CD4-positive, alpha-beta memory T cell (primary cell): ENCODE measurements at regions of chr18 and their contacts with region 1.

Region 1: DNA sequence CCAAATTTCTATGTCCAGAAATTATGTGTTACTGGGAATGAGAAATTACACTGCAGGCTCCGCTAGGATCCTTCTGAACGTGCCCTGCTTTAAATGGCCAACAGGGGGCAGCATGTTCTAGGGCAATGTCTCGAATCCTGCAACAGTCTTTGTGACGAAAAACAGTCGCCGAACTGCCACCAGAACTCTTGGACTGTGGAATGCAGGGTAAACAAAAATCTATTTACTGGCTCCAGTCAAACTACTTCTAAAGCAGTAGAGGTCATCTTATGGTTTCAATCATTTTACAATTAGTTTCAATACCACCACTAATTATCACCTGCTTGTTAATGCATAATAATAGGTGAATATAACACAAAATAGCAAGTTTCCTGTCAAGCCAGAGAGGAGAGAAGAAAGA is 9.8 kb upstream of the ZNF397 start:
- DNase-seq: peak; percentile 72 to 79 (median 78)
- H3K4me3 ChIP-seq: no peak overlapping the region
- H3K4me3 Mint-ChIP-seq: peak overlapping the region in 7 of 8 donors; percentile 21 to 76 (median 51)
- H3K27ac ChIP-seq: no peak overlapping the region
- H3K27ac Mint-ChIP-seq: peak overlapping the region in 1 of 7 donors; percentile 50
- H3K4me1 ChIP-seq: no peaks in the 10 kb centered on the region
- H3K4me1 Mint-ChIP-seq: peaks cover 3 to 4% (median 3%) of the 10 kb centered on the region in 4 donors
- H3K27me3 ChIP-seq: no peaks in the 10 kb centered on the region
- H3K27me3 Mint-ChIP-seq: no peaks in the 10 kb centered on the region

Region 2: DNA sequence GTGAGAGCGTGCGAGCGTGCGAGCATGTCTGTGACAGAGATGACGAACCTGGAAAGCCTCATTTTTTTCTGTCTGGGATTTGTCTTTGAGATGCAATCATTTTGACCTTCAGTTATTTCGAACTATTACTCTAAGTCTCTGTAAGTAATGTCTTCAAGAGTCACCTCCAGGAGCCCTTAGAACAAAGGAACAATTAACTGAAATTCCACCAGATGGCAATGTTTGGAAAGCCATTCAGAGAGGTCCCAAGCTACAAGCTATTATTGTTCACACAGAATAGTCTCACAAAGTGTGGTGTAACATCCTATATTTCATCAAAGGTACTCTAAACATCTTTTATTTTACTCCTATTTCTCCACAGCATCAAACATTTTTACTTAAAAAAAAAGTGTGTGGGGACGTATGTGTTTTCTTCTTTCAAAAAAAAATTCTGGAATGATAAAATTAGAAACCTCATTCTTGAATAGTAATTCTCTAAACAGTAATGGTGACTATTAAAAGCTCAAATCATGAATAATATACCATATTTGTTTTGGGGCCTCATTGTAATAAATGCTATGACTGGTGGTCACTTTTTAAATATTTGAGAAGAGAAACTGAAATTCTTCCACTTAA is 225.0 kb before region 1 on chr18:
- CTCF ChIA-PET with region 1: interaction called, 6 read pairs
- POLR2A ChIA-PET with region 1: no interaction called
- intact Hi-C with region 1: loop called (anchors 1 kb)
- DNase-seq: peak; percentile 35 to 63 (median 51)
- H3K4me3 ChIP-seq: no peak overlapping the region
- H3K4me3 Mint-ChIP-seq: no peak overlapping the region
- H3K27ac ChIP-seq: no peak overlapping the region
- H3K27ac Mint-ChIP-seq: no peak overlapping the region
- H3K4me1 ChIP-seq: no peaks in the 10 kb centered on the region
- H3K4me1 Mint-ChIP-seq: no peaks in the 10 kb centered on the region
- H3K27me3 ChIP-seq: no peaks in the 10 kb centered on the region
- H3K27me3 Mint-ChIP-seq: peaks cover 0 to 3% of the 10 kb centered on the region in 2 donors

Region 3: DNA sequence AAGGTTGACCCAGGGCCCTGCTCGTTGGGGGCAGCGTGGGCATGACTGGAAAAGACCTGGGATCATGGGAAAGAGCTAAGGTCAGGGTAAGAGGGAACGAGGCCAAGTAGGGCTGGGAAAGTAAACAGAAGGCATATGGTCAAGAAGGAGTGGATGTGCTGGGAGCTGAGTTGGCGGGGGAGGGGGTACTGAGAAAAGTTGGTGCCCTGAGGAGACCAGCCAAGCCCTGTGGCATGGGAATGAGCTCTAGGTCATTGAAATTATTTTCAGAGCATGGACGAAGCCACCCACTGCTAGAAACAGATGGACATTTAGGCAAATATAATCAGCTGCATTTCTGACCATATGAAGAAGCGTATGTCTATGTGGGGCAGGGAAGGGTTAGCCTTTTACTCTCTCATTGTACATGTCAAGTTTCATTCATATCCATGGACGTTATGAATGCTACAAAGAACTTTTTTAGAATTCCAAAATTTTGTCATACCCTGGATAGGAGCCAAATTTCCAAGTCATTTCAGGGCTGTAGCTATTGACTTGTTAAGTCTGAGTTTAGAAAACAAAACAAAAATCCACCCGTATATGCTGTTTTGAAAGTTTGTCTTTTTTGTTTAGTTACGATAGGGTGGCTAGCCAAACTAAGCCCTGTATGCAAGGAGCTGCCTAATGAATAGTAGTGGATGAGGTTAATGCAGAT is 170.8 kb before region 1 on chr18:
- CTCF ChIA-PET with region 1: no interaction called
- POLR2A ChIA-PET with region 1: no interaction called
- intact Hi-C with region 1: no loop called
- DNase-seq: no peak
- H3K4me3 ChIP-seq: no peak overlapping the region
- H3K4me3 Mint-ChIP-seq: no peak overlapping the region
- H3K27ac ChIP-seq: no peak overlapping the region
- H3K27ac Mint-ChIP-seq: peak overlapping the region in 3 of 7 donors; percentile 22 to 88 (median 69)
- H3K4me1 ChIP-seq: no peaks in the 10 kb centered on the region
- H3K4me1 Mint-ChIP-seq: peaks cover 34 to 77% (median 53%) of the 10 kb centered on the region in 4 donors
- H3K27me3 ChIP-seq: no peaks in the 10 kb centered on the region
- H3K27me3 Mint-ChIP-seq: no peaks in the 10 kb centered on the region

Region 4: GRCh38 chr18:35267161-35267651 is 36.2 kb after region 1 on chr18:
- CTCF ChIA-PET with region 1: interaction called, 21 read pairs
- POLR2A ChIA-PET with region 1: no interaction called
- intact Hi-C with region 1: no loop called
- DNase-seq: peak; percentile 49 to 69 (median 51)
- H3K4me3 ChIP-seq: peak overlapping the region; percentile 23 to 78
- H3K4me3 Mint-ChIP-seq: peak overlapping the region; percentile 93 to 99 (median 96)
- H3K27ac ChIP-seq: peak overlapping the region; percentile 62
- H3K27ac Mint-ChIP-seq: peak overlapping the region; percentile 83 to 98 (median 96)
- H3K4me1 ChIP-seq: peaks cover 10% of the 10 kb centered on the region
- H3K4me1 Mint-ChIP-seq: peaks cover 17 to 30% (median 25%) of the 10 kb centered on the region in 4 donors
- H3K27me3 ChIP-seq: no peaks in the 10 kb centered on the region
- H3K27me3 Mint-ChIP-seq: no peaks in the 10 kb centered on the region

Region 5: DNA sequence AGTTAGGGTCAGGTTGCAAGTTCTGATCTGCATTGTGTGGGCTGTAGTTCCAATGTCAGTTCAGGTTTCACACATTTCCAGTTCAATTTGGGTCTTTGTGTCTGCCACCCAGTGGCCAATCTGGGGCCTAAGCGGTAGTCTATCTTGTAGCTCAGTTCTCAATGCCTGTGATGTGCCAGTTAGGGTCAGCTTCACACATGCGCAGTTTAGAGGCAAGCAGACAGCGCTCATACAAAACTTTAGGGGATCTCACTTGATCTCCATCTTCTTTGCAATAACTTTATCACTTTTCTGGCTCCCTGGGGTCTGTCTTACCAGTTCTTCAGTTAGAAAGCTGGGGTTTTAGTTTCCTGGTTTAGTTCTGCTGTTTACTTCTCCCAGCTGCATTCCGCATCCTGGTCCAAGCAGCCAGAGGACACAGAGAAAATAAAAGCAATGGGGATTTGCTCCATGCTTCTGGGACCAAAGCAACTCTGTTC is 124.1 kb after region 1 on chr18:
- CTCF ChIA-PET with region 1: interaction called, 88 read pairs
- POLR2A ChIA-PET with region 1: interaction called, 4 read pairs
- intact Hi-C with region 1: loop called (anchors 1 kb)
- DNase-seq: peak; percentile 54 to 63 (median 60)
- H3K4me3 ChIP-seq: no peak overlapping the region
- H3K4me3 Mint-ChIP-seq: no peak overlapping the region
- H3K27ac ChIP-seq: no peak overlapping the region
- H3K27ac Mint-ChIP-seq: peak overlapping the region in 1 of 7 donors; percentile 19
- H3K4me1 ChIP-seq: no peaks in the 10 kb centered on the region
- H3K4me1 Mint-ChIP-seq: peaks cover 0 to 2% (median 0%) of the 10 kb centered on the region in 4 donors
- H3K27me3 ChIP-seq: no peaks in the 10 kb centered on the region
- H3K27me3 Mint-ChIP-seq: peaks cover 0 to 2% of the 10 kb centered on the region in 2 donors

Region 6: DNA sequence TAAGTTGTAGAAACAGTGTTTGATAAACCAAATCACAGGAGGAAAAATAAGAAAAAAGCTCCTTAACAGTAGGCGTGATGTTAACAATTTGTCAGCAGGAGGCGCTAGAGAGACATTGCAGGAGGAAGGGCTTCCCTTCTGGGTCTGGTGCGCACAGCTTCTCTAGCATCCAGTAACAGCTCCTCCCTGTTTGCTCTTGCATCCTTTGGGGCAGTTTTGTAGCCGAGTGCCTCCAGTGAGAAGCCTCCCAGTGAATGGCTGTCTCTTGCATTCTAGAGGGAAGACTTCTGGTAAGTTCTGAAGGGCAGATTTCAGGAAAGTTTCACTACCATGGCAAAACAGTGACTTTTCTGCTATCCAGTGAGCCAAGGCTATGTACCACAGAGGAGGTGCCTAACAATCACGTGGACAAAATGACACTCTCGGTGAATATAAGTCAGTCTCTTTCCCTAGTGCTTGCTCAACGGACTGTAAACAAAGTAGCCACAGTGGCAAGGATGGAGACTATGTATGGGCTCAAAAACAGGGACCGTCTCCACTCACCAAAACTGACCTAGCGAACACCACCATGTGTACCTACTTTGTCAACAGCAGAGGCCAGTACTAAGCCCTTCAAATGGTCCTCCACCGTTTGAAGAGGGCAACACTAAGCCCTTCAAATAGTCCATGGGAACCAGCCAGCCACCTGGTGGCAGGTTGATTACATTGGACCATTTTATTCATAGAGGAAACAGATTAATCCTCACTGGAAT is 155.7 kb after region 1 on chr18:
- CTCF ChIA-PET with region 1: interaction called, 50 read pairs
- POLR2A ChIA-PET with region 1: no interaction called
- intact Hi-C with region 1: loop called (anchors 1 kb)
- DNase-seq: peak; percentile 69 to 73 (median 73)
- H3K4me3 ChIP-seq: no peak overlapping the region
- H3K4me3 Mint-ChIP-seq: peak overlapping the region in 2 of 8 donors; percentile 29 to 65
- H3K27ac ChIP-seq: no peak overlapping the region
- H3K27ac Mint-ChIP-seq: peak overlapping the region in 2 of 7 donors; percentile 6 to 32
- H3K4me1 ChIP-seq: peaks cover 5% of the 10 kb centered on the region
- H3K4me1 Mint-ChIP-seq: peaks cover 0 to 4% (median 2%) of the 10 kb centered on the region in 4 donors
- H3K27me3 ChIP-seq: peaks cover 5% of the 10 kb centered on the region
- H3K27me3 Mint-ChIP-seq: peaks cover 8 to 25% of the 10 kb centered on the region in 2 donors

Region 7: GRCh38 chr18:35407871-35408481 is 176.9 kb after region 1 on chr18:
- CTCF ChIA-PET with region 1: interaction called, 6 read pairs
- POLR2A ChIA-PET with region 1: no interaction called
- intact Hi-C with region 1: loop called (anchors 1 kb)
- DNase-seq: peak in 4 of 5 donors; percentile 48 to 66 (median 60)
- H3K4me3 ChIP-seq: no peak overlapping the region
- H3K4me3 Mint-ChIP-seq: no peak overlapping the region
- H3K27ac ChIP-seq: no peak overlapping the region
- H3K27ac Mint-ChIP-seq: no peak overlapping the region
- H3K4me1 ChIP-seq: peaks cover 4% of the 10 kb centered on the region
- H3K4me1 Mint-ChIP-seq: peaks cover 0 to 10% (median 9%) of the 10 kb centered on the region in 4 donors
- H3K27me3 ChIP-seq: no peaks in the 10 kb centered on the region
- H3K27me3 Mint-ChIP-seq: peaks cover 2 to 4% of the 10 kb centered on the region in 2 donors